Heart left ventricle (tissue), 16 donors: ENCODE measurements at regions of chr6 and their contacts with region 1.

Region 1: GRCh38 chr6:45421709-45422502 is 44.2 kb upstream of the SUPT3H start:
- DNase-seq: peak; percentile 50 to 81 (median 65)
- ATAC-seq: peak; percentile 39 to 77 (median 56)
- H3K4me3 ChIP-seq: peak overlapping the region; percentile 41 to 81 (median 70)
- H3K27ac ChIP-seq: peak overlapping the region in 7 of 12 donors; percentile 37 to 82 (median 54)
- H3K4me1 ChIP-seq: peaks cover 2 to 48% (median 21%) of the 10 kb centered on the region in 12 donors
- H3K27me3 ChIP-seq: peaks cover 2 to 55% (median 23%) of the 10 kb centered on the region in 9 donors
- CTCF ChIP-seq: peak in 6 of 12 donors; percentile 4 to 42 (median 19)
- POLR2A ChIP-seq: no peak

Region 2: GRCh38 chr6:45377554-45378333 is 44.2 kb before region 1 on chr6 and contains the start of gene SUPT3H:
- intact Hi-C with region 1: loop called in 2 of 10 experiments (anchors 5 kb)
- DNase-seq: peak; percentile 91 to 97 (median 94)
- ATAC-seq: peak; percentile 96 to 98 (median 97)
- H3K4me3 ChIP-seq: peak within 1 kb of the TSS; percentile 70 to 94 (median 82)
- H3K27ac ChIP-seq: peak within 1 kb of the TSS; percentile 88 to 99 (median 96)
- H3K4me1 ChIP-seq: peaks cover 0 to 23% (median 13%) of the 10 kb centered on the region in 12 donors
- H3K27me3 ChIP-seq: no peaks in the 10 kb centered on the region
- CTCF ChIP-seq: peak in 8 of 12 donors; percentile 7 to 49 (median 22)
- POLR2A ChIP-seq: peak in 1 of 2 donors; percentile 67
- total RNA-seq, gene SUPT3H: 1.5 to 8.1 (median 4.1) TPM

Region 3: DNA sequence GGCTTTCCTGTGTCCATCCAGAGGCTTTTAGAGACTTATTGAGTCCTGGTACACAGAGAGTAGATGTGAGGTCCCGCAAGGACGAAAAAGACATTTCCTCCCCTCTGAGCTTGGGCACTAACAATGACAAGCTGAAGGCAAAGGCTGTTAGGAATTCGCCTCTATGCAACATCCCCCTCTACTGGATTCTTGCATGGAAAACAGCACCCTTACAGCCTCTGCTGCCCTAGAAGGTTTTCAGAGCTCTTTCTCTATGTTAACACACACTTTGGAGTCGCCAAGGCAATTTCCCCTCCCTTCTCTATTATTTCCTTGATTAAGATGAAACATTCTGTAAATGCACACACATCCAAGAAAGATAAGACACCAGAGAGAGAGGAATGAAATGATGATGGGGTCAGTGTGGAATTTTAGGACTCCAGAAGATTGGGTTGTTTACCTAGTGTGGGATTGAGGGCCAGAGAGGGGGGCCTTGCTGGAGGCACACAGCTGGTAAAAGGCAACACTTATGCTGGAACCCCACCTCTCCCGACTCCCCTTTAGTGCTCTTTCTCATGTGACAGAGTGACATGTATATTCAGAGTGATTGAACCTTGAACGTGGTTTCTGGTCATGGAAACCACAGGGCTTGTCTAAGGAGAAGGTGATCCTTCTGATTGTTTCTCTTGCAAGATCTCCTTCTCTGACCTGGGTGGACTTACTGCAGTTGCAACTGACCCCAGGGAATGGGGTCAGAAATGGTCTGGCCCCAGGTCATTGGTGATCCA is 293.0 kb after region 1 on chr6:
- intact Hi-C with region 1: loop called (anchors 1 to 10 kb)
- DNase-seq: peak in 3 of 5 donors; percentile 33 to 54 (median 42)
- ATAC-seq: peak; percentile 85 to 94 (median 94)
- H3K4me3 ChIP-seq: peak overlapping the region in 3 of 12 donors; percentile 12 to 23 (median 22)
- H3K27ac ChIP-seq: no peak overlapping the region
- H3K4me1 ChIP-seq: peaks cover 0 to 15% (median 1%) of the 10 kb centered on the region in 12 donors
- H3K27me3 ChIP-seq: no peaks in the 10 kb centered on the region
- CTCF ChIP-seq: peak; percentile 66 to 88 (median 80)
- POLR2A ChIP-seq: no peak